ENCODE measurements at regions of chrX and their contacts with region 1.

Region 1: GRCh38 chrX:54182864-54183608 is at the start of gene FAM120C:
- DNase-seq: no peak
- H3K4me3 ChIP-seq: peak within 1 kb of the TSS; percentile 64
- H3K27me3 ChIP-seq: no peaks in the 10 kb centered on the region
- CTCF ChIP-seq: no peak
- polyA plus RNA-seq, gene FAM120C: 3.7 and 4.4 TPM in 2 replicates

Region 2: DNA sequence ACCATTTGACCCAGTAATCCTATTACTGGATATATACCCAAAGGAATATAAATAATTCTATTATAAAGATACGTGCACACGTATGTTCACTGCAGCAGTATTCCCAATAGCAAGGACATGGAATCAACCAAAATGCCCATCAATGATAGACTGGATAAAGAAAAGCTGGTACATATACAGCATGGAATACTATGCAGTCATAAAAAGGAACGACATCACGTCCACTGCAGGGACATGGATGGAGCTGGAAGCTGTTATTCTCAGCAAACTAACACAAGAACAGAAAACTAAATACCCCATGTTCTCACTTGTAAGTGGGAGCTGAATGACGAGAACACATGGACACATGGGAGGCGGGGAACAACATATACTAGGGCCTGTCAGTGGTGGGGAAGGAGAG is 208.5 kb before region 1 on chrX:
- CTCF ChIA-PET with region 1: no interaction called
- POLR2A ChIA-PET with region 1: no interaction called
- DNase-seq: no peak
- H3K4me3 ChIP-seq: no peak overlapping the region
- H3K27me3 ChIP-seq: no peaks in the 10 kb centered on the region
- CTCF ChIP-seq: no peak

Region 3: GRCh38 chrX:54066841-54067240 is 116.2 kb before region 1 on chrX:
- CTCF ChIA-PET with region 1: no interaction called
- POLR2A ChIA-PET with region 1: no interaction called
- DNase-seq: no peak
- H3K4me3 ChIP-seq: no peak overlapping the region
- H3K27me3 ChIP-seq: no peaks in the 10 kb centered on the region
- CTCF ChIP-seq: no peak

Region 4: DNA sequence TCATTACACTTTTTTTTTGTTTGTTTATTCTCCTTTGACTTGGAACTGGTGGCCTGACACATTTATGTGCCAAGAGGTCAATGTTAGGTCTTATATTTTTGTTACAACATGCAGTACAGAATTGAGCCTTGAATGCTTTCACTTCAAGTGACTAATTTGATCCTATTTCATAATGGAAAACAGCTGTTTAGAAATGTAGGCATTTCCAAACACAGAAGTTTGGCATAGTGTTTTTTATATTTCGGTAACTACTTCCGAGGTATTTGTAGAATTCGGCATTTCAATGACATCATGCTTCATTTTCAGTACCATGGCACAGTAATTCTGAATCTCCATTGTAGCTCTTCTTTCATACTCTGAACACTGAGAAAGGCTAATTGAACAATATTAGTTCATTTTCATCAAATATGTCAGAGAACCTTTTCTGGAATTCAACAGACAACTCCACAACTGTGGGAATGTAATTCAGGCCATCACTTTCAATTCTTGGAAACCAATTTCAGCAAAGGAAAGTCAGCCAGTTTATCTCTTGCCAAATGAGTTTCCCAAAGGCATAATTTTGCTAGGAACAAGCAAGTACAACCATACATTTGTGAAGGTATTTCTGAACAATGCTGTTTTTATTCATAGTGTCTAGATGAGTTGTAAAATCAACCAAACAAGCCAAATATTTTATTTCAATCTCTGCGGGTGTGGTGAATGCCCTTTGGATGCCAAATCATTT is 11.3 kb before region 1 on chrX:
- CTCF ChIA-PET with region 1: interaction called, 4 read pairs
- POLR2A ChIA-PET with region 1: interaction called, 12 read pairs
- DNase-seq: no peak
- H3K4me3 ChIP-seq: no peak overlapping the region
- H3K27me3 ChIP-seq: no peaks in the 10 kb centered on the region
- CTCF ChIP-seq: no peak

Region 5: GRCh38 chrX:54397113-54397512 is 214.1 kb after region 1 on chrX:
- CTCF ChIA-PET with region 1: no interaction called
- POLR2A ChIA-PET with region 1: no interaction called
- DNase-seq: no peak
- H3K4me3 ChIP-seq: no peak overlapping the region
- H3K27me3 ChIP-seq: no peaks in the 10 kb centered on the region
- CTCF ChIP-seq: no peak